ENCODE measurements at regions of chr9 and their contacts with region 1.

Region 1: GRCh38 chr9:38026021-38026809 is 42.8 kb downstream of the SHB start:
- DNase-seq: peak; percentile 93
- H3K4me3 ChIP-seq: no peak overlapping the region
- H3K27ac ChIP-seq: peak overlapping the region; percentile 64
- H3K4me1 ChIP-seq: peaks cover 59% of the 10 kb centered on the region
- H3K27me3 ChIP-seq: no peaks in the 10 kb centered on the region
- CTCF ChIP-seq: no peak

Region 2: GRCh38 chr9:37963936-37964739 is 62.1 kb before region 1 on chr9:
- CTCF ChIA-PET with region 1: no interaction called
- POLR2A ChIA-PET with region 1: no interaction called
- intact Hi-C with region 1: loop called (anchors 10 kb)
- DNase-seq: peak; percentile 54
- H3K4me3 ChIP-seq: no peak overlapping the region
- H3K27ac ChIP-seq: peak overlapping the region; percentile 74
- H3K4me1 ChIP-seq: peaks cover 13% of the 10 kb centered on the region
- H3K27me3 ChIP-seq: no peaks in the 10 kb centered on the region
- CTCF ChIP-seq: no peak

Region 3: GRCh38 chr9:38061326-38061977 is 35.2 kb after region 1 on chr9:
- CTCF ChIA-PET with region 1: no interaction called
- POLR2A ChIA-PET with region 1: interaction called, 10 read pairs
- intact Hi-C with region 1: loop called (anchors 5 kb)
- DNase-seq: no peak
- H3K4me3 ChIP-seq: no peak overlapping the region
- H3K27ac ChIP-seq: peak overlapping the region; percentile 30
- H3K4me1 ChIP-seq: peaks cover 52% of the 10 kb centered on the region
- H3K27me3 ChIP-seq: no peaks in the 10 kb centered on the region
- CTCF ChIP-seq: no peak

Region 4: GRCh38 chr9:38068866-38069629 is 42.8 kb after region 1 on chr9 and contains the start of gene SHB:
- CTCF ChIA-PET with region 1: no interaction called
- POLR2A ChIA-PET with region 1: no interaction called
- intact Hi-C with region 1: loop called (anchors 5 kb)
- DNase-seq: peak; percentile 87
- H3K4me3 ChIP-seq: peak within 1 kb of the TSS; percentile 89
- H3K27ac ChIP-seq: peak within 1 kb of the TSS; percentile 91
- H3K4me1 ChIP-seq: peaks cover 20% of the 10 kb centered on the region
- H3K27me3 ChIP-seq: no peaks in the 10 kb centered on the region
- CTCF ChIP-seq: peak; percentile 50; the same call in 1 of the 2 replicates
- total RNA-seq, gene SHB: 14.7 and 20.7 TPM in 2 replicates

Region 5: DNA sequence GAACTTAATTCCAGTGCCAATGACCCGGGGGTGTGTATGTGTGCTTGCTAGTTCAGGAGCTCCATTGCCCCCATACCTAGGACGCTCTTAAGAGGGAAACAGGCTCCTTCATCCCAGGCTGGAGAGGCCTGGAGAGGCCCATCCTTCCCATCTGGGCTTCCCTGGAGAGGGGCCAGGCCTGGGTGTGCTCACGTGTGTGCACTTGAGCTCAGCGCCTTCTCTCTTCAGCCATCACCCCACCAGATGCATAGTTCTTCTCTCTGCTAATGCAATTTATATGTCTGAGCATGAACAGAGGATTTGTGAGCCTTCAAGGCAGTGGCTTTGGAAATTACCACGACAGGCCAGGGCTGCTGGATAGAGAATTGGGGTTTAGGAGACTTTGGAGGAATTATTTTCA is 91.4 kb after region 1 on chr9:
- CTCF ChIA-PET with region 1: no interaction called
- POLR2A ChIA-PET with region 1: no interaction called
- intact Hi-C with region 1: no loop called
- DNase-seq: no peak
- H3K4me3 ChIP-seq: no peak overlapping the region
- H3K27ac ChIP-seq: no peak overlapping the region
- H3K4me1 ChIP-seq: no peaks in the 10 kb centered on the region
- H3K27me3 ChIP-seq: peaks cover 5% of the 10 kb centered on the region
- CTCF ChIP-seq: no peak